ENCODE measurements at regions of chr6 and their contacts with region 1.

Region 1: GRCh38 chr6:3887150-3887700 is 38.1 kb downstream of the FAM50B start:
- DNase-seq: no peak
- H3K4me3 ChIP-seq: no peak overlapping the region
- H3K27ac ChIP-seq: no peak overlapping the region
- H3K4me1 ChIP-seq: no peaks in the 10 kb centered on the region
- H3K27me3 ChIP-seq: no peaks in the 10 kb centered on the region
- CTCF ChIP-seq: peak in 3 of 4 experiments; percentile 31 to 36 (median 32)
- POLR2A ChIP-seq: no peak

Region 2: GRCh38 chr6:3742426-3743344 is 144.5 kb before region 1 on chr6:
- intact Hi-C with region 1: loop called (anchors 2 kb)
- DNase-seq: peak; percentile 86
- H3K4me3 ChIP-seq: no peak overlapping the region
- H3K27ac ChIP-seq: peak overlapping the region; percentile 65 to 71
- H3K4me1 ChIP-seq: peaks cover 23% of the 10 kb centered on the region
- H3K27me3 ChIP-seq: no peaks in the 10 kb centered on the region
- CTCF ChIP-seq: peak; percentile 93 to 99 (median 96)
- POLR2A ChIP-seq: no peak

Region 3: DNA sequence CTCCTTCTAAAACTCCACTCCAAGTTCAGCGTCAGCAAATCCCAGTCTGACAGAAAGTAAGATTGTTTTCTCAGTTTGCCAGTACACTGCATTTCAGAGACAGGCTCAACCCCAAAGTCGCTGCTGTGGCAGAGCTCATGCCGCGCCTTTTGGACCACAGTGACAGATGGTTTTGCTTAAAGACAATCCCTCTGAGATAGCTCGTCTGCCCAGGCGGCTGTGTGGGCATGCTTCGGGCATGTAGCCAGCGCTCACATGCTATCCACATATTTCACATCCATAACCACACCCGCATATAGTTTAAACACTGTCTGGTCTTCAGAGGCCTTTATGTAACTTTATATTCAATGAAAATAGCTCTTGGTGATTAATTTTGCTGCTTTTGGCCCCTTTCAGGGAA is 121.0 kb before region 1 on chr6:
- intact Hi-C with region 1: no loop called
- DNase-seq: peak; percentile 52
- H3K4me3 ChIP-seq: no peak overlapping the region
- H3K27ac ChIP-seq: no peak overlapping the region
- H3K4me1 ChIP-seq: no peaks in the 10 kb centered on the region
- H3K27me3 ChIP-seq: no peaks in the 10 kb centered on the region
- CTCF ChIP-seq: no peak
- POLR2A ChIP-seq: no peak

Region 4: GRCh38 chr6:3841711-3842565 is 45.3 kb before region 1 on chr6:
- intact Hi-C with region 1: no loop called
- DNase-seq: no peak
- H3K4me3 ChIP-seq: no peak overlapping the region
- H3K27ac ChIP-seq: no peak overlapping the region
- H3K4me1 ChIP-seq: no peaks in the 10 kb centered on the region
- H3K27me3 ChIP-seq: no peaks in the 10 kb centered on the region
- CTCF ChIP-seq: no peak
- POLR2A ChIP-seq: no peak

Region 5: DNA sequence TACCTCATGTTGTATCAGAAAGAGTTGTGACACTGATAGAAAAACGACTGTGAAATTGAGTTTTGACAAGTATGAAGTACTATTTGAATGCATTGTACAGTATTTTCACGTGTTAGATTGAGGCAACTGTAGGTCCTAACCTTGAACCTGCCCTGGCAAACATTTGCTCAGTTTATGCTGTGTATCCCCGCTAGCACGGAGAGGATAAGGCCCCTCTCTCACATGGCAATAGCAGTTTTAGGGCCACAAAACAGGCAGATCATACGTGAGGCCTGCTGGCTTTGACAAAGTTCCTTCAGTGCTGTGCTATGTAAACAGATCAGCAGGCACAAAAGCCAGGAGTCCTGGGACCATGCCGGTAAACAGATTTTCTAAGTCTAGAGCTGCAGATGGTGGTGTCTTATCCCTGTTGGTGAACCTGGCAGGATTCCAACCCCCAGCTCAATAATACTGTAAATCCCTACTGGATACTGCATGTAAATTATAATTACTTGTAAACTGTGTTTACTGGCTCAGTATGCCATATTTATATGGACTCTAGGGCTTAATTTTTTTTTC is 215.5 kb after region 1 on chr6:
- intact Hi-C with region 1: no loop called
- DNase-seq: peak; percentile 30
- H3K4me3 ChIP-seq: no peak overlapping the region
- H3K27ac ChIP-seq: peak overlapping the region; percentile 46 to 58
- H3K4me1 ChIP-seq: peaks cover 7% of the 10 kb centered on the region
- H3K27me3 ChIP-seq: no peaks in the 10 kb centered on the region
- CTCF ChIP-seq: no peak
- POLR2A ChIP-seq: no peak